MCF 10A (cell line): ENCODE measurements at regions of chr22 and their contacts with region 1.

Region 1: DNA sequence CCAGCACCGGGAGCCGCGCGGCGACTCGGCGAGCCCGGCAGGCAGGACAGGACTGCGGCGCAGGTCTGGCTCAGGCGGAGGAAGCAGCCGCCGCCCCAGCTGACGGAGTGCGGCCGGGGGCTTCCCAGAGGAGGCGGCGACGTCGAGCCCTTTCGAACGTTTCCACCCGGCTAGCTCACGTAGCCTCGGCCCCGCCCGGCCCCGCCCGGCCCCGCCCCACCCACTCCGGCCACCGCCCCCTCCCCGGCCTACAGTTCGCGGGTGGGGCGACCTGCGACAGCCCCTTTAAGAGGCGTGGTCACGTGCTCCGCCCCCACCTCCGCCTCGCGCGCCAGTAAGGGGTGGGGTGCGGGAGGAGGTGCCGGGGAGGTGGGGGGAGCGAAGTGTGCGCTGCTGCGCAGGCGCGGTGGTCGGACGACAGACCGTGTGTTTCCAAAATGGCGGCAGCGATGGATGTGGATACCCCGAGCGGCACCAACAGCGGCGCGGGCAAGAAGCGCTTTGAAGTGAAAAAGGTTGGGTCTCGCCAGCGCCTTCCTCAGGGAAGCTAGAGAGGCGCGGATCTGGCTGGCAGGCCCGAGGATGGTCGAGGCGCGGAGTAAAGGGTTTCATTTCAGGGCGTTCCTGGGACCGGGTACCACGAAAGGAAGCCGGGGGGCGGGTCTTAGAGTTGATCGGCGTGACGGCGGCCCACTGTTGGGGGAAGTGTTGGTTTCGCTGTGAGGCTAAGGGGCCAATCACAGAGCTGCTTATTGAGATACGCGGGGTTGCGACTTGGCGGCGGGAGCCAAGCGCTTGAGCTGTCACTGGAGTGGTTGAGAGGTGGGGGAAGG is at the start of gene RBX1:
- DNase-seq: peak; percentile 98
- H3K4me3 Mint-ChIP-seq: peak within 1 kb of the TSS; percentile 98
- H3K27ac Mint-ChIP-seq: peak within 1 kb of the TSS; percentile 99
- H3K4me1 Mint-ChIP-seq: peaks cover 8% of the 10 kb centered on the region
- H3K27me3 Mint-ChIP-seq: no peaks in the 10 kb centered on the region
- CTCF ChIP-seq: no peak
- total RNA-seq, gene RBX1: 46.7 and 71.3 TPM in 2 replicates

Region 2: GRCh38 chr22:40928657-40929056 is 22.5 kb before region 1 on chr22:
- CTCF ChIA-PET with region 1: interaction called, 3 read pairs
- POLR2A ChIA-PET with region 1: interaction called, 14 read pairs
- intact Hi-C with region 1: no loop called
- DNase-seq: no peak
- H3K4me3 Mint-ChIP-seq: no peak overlapping the region
- H3K27ac Mint-ChIP-seq: no peak overlapping the region
- H3K4me1 Mint-ChIP-seq: no peaks in the 10 kb centered on the region
- H3K27me3 Mint-ChIP-seq: no peaks in the 10 kb centered on the region
- CTCF ChIP-seq: no peak

Region 3: GRCh38 chr22:40973099-40973498 is 21.9 kb after region 1 on chr22:
- CTCF ChIA-PET with region 1: no interaction called
- POLR2A ChIA-PET with region 1: interaction called, 14 read pairs
- intact Hi-C with region 1: no loop called
- DNase-seq: no peak
- H3K4me3 Mint-ChIP-seq: no peak overlapping the region
- H3K27ac Mint-ChIP-seq: no peak overlapping the region
- H3K4me1 Mint-ChIP-seq: no peaks in the 10 kb centered on the region
- H3K27me3 Mint-ChIP-seq: no peaks in the 10 kb centered on the region
- CTCF ChIP-seq: no peak

Region 4: GRCh38 chr22:41091132-41092022 is 140.2 kb after region 1 on chr22:
- CTCF ChIA-PET with region 1: interaction called, 5 read pairs
- POLR2A ChIA-PET with region 1: interaction called, 231 read pairs
- intact Hi-C with region 1: loop called (anchors 1 kb)
- DNase-seq: peak; percentile 99
- H3K4me3 Mint-ChIP-seq: peak overlapping the region; percentile 98
- H3K27ac Mint-ChIP-seq: peak overlapping the region; percentile 99
- H3K4me1 Mint-ChIP-seq: peaks cover 28% of the 10 kb centered on the region
- H3K27me3 Mint-ChIP-seq: no peaks in the 10 kb centered on the region
- CTCF ChIP-seq: no peak

Region 5: GRCh38 chr22:41285820-41286638 is 334.9 kb after region 1 on chr22 and contains the start of gene RANGAP1:
- CTCF ChIA-PET with region 1: no interaction called
- POLR2A ChIA-PET with region 1: interaction called, 13 read pairs
- intact Hi-C with region 1: no loop called
- DNase-seq: peak; percentile 99
- H3K4me3 Mint-ChIP-seq: peak within 1 kb of the TSS; percentile 80
- H3K27ac Mint-ChIP-seq: peak within 1 kb of the TSS; percentile 85
- H3K4me1 Mint-ChIP-seq: peaks cover 29% of the 10 kb centered on the region
- H3K27me3 Mint-ChIP-seq: no peaks in the 10 kb centered on the region
- CTCF ChIP-seq: no peak
- total RNA-seq, gene RANGAP1: 84.7 and 117 TPM in 2 replicates

Region 6: GRCh38 chr22:41491374-41492100 is 540.4 kb after region 1 on chr22:
- CTCF ChIA-PET with region 1: no interaction called
- POLR2A ChIA-PET with region 1: no interaction called
- intact Hi-C with region 1: no loop called
- DNase-seq: no peak
- H3K4me3 Mint-ChIP-seq: no peak overlapping the region
- H3K27ac Mint-ChIP-seq: no peak overlapping the region
- H3K4me1 Mint-ChIP-seq: peaks cover 22% of the 10 kb centered on the region
- H3K27me3 Mint-ChIP-seq: no peaks in the 10 kb centered on the region
- CTCF ChIP-seq: no peak